Naive thymus-derived CD4-positive, alpha-beta T cell (primary cell): ENCODE measurements at regions of chr18 and their contacts with region 1.

Region 1: DNA sequence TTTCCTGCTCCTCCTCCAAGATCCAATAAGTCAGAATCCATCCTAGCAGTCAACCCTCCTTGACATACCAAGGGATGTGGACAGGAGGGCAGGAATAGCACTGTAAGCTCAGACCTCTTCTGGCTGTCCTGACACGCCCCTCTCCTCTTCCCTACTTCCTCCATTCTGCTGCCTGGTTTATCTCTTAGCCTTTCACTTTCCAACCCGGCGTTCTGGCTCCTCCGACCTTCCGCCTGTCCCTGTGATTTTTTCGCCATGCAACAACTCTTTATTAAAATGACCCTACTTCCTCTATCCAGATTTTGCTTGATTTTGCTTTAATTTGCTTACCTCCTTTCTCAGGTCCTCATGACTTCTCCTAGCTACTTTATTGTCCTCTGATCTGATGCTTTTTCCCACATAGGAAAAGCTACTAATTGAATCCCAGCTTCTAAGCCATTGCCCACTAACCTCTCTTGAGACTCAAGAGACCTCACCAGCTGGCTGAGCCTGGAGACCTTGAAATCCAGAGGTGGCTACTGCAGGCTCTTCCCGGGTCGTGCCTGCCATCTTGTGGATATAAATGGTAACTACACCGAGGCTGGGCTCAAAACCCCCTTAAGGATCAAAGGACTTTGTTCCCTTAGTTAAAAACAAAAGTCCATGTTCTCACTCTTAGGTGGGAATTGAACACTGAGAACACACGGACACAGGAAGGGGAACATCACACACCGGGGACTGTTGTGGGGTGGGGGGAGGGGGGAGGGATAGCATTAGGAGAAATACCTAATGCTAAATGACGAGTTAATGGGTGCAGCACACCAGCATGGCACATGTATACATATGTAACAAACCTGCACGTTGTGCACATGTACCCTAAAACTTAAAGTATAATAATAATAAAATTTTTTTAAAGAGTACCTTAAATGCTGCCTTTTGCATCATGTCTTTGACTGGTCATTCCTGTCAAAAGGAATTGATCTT is 139.4 kb downstream of the AKAIN1 start:
- DNase-seq: peak; percentile 17 to 54 (median 48)
- ATAC-seq: peak; percentile 56
- H3K4me3 ChIP-seq: no peak overlapping the region
- H3K4me3 Mint-ChIP-seq: peak overlapping the region in 1 of 10 donors; percentile 8
- H3K27ac ChIP-seq: no peak overlapping the region
- H3K27ac Mint-ChIP-seq: peak overlapping the region in 6 of 9 donors; percentile 14 to 89 (median 42)
- H3K4me1 ChIP-seq: peaks cover 11 to 18% of the 10 kb centered on the region in 2 donors
- H3K4me1 Mint-ChIP-seq: peaks cover 14 to 25% (median 21%) of the 10 kb centered on the region in 7 donors
- H3K27me3 ChIP-seq: no peaks in the 10 kb centered on the region
- H3K27me3 Mint-ChIP-seq: peaks cover 0 to 4% (median 2%) of the 10 kb centered on the region in 5 donors

Region 2: DNA sequence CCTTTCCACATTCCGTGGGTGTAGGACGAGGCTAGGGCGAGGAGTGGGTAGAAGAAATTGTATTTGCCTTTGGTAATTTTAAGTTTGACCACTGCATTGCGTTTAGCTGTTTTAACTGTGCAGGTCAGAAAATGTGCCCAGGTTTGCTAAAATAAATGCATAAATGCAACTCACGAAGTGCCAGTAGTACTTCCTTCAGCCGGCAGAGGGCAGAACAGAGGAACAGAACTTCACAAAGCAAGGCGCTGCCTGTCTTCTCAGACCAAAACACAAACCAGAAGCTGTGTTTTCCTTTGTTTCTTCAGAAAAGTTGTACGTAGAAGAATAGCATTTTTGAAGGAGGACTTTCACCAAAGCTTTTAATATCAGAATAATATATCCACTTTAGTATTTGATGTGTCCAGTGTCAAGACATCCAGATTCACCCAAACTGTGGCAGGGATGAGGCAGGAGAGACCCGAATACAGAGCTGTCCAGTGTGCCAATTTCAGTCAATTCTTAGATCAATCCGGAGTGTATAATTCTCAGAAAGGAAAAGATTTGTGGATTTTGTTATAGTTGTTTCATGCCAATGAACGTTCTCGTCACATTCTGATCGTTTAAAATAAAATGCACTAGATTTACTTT is 951.1 kb before region 1 on chr18:
- CTCF ChIA-PET with region 1: interaction called, 40 read pairs
- POLR2A ChIA-PET with region 1: no interaction called
- intact Hi-C with region 1: loop called in 1 of 2 experiments (anchors 1 kb)
- DNase-seq: peak in 7 of 9 donors; percentile 13 to 50 (median 36)
- ATAC-seq: no peak
- H3K4me3 ChIP-seq: no peak overlapping the region
- H3K4me3 Mint-ChIP-seq: no peak overlapping the region
- H3K27ac ChIP-seq: no peak overlapping the region
- H3K27ac Mint-ChIP-seq: no peak overlapping the region
- H3K4me1 ChIP-seq: no peaks in the 10 kb centered on the region
- H3K4me1 Mint-ChIP-seq: no peaks in the 10 kb centered on the region
- H3K27me3 ChIP-seq: no peaks in the 10 kb centered on the region
- H3K27me3 Mint-ChIP-seq: peaks cover 0 to 8% (median 5%) of the 10 kb centered on the region in 5 donors